Common myeloid progenitor, CD34-positive (primary cell): ENCODE measurements at regions of chr6 and their contacts with region 1.

Region 1: GRCh38 chr6:53492860-53493634 is 51.9 kb downstream of the GCLC start:
- DNase-seq: peak; percentile 59 to 76 (median 76)
- H3K4me3 ChIP-seq: peak overlapping the region in 4 of 7 experiments; percentile 9 to 73 (median 39)
- H3K27ac ChIP-seq: no peak overlapping the region
- H3K4me1 ChIP-seq: peaks cover 0 to 6% (median 2%) of the 10 kb centered on the region in 4 experiments
- H3K27me3 ChIP-seq: no peaks in the 10 kb centered on the region

Region 2: GRCh38 chr6:53504512-53504911 is 11.5 kb after region 1 on chr6:
- CTCF ChIA-PET with region 1: interaction called, 18 read pairs
- POLR2A ChIA-PET with region 1: no interaction called
- DNase-seq: no peak
- H3K4me3 ChIP-seq: no peak overlapping the region
- H3K27ac ChIP-seq: no peak overlapping the region
- H3K4me1 ChIP-seq: no peaks in the 10 kb centered on the region
- H3K27me3 ChIP-seq: no peaks in the 10 kb centered on the region

Region 3: DNA sequence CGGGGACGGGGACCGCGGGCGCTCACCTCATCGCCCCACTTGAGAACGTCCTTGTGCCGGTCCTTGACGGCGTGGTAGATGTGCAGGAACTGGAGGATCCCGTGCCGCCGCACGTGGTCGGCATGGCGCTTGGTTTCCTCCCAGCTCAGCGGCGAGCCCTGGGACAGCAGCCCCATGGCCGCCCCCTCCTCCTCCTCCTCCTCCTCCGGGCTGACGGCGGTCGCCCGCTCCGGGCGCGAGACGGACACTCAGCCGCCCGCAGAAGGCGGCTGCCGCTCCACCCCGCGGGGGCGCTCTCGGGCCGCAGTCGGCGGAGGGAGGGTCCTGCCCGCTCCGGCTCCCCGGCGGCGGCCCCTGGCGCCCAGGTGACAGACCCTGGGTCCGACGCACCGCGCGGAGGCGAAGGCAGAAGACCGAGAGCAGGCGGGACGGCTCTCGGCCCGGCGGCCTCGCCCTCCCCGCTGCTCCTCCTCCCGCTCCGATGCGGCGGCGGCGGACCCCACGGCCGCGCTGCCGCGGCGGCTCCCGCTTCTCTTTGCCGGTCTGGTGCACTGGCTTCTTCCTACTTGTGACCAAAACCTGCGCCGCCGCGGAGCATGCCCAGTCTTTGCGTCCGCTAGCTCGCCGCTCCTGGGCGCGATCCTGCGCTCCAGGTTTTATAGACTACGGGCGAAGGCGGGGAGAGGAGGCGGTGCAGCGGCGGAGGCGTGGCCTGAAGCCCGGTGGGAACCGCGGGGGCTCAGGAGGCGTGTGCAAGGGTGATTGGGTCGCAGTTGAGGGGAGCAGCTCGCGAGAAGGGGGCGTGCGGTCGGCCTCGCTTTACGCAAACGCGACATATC is 51.6 kb after region 1 on chr6 and contains the start of gene GCLC:
- CTCF ChIA-PET with region 1: interaction called, 10 read pairs
- POLR2A ChIA-PET with region 1: no interaction called
- DNase-seq: peak; percentile 97 to 99 (median 98)
- H3K4me3 ChIP-seq: peak within 1 kb of the TSS; percentile 74 to 91 (median 84)
- H3K27ac ChIP-seq: peak within 1 kb of the TSS; percentile 73 to 86
- H3K4me1 ChIP-seq: peaks cover 3 to 47% (median 27%) of the 10 kb centered on the region in 4 experiments
- H3K27me3 ChIP-seq: no peaks in the 10 kb centered on the region

Region 4: DNA sequence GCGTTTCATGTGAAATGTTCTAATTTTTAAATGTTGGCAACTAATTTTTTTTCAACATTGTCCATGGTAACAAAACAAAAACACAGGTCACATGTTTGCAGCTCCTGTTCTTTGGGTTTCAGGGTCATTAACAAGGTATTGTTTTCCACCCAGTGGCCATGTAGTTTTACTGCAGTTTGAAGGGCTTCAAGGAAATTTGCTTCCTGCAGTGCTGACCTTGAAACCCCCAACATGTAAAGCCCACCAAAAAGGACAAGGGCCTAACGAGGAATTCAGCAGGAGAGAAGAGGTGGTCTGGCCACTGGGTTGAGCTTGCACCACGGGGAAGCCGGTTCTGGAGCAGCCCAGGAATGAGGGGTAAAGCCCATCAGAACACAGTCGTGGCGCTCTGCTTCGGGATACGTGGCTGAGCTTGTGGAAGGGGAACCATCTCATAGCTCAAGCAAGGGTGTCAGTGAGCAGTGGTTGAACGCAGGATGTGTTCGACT is 186.4 kb after region 1 on chr6:
- CTCF ChIA-PET with region 1: interaction called, 10 read pairs
- POLR2A ChIA-PET with region 1: no interaction called
- DNase-seq: peak; percentile 78 to 88 (median 83)
- H3K4me3 ChIP-seq: no peak overlapping the region
- H3K27ac ChIP-seq: peak overlapping the region; percentile 52 to 56
- H3K4me1 ChIP-seq: peaks cover 0 to 6% (median 0%) of the 10 kb centered on the region in 4 experiments
- H3K27me3 ChIP-seq: no peaks in the 10 kb centered on the region

Region 5: GRCh38 chr6:53734473-53735299 is 241.6 kb after region 1 on chr6:
- CTCF ChIA-PET with region 1: interaction called, 11 read pairs
- POLR2A ChIA-PET with region 1: no interaction called
- DNase-seq: peak; percentile 31 to 49 (median 44)
- H3K4me3 ChIP-seq: peak overlapping the region in 1 of 7 experiments; percentile 43
- H3K27ac ChIP-seq: no peak overlapping the region
- H3K4me1 ChIP-seq: peaks cover 10 to 35% (median 22%) of the 10 kb centered on the region in 4 experiments
- H3K27me3 ChIP-seq: no peaks in the 10 kb centered on the region